Motor neuron (in vitro differentiated cells): ENCODE measurements at regions of chr22 and their contacts with region 1.

Region 1: GRCh38 chr22:30910358-30910757 is 58.2 kb downstream of the MORC2 start:
- ATAC-seq: no peak
- H3K4me3 ChIP-seq: no peak overlapping the region
- H3K27ac ChIP-seq: no peak overlapping the region
- H3K4me1 ChIP-seq: no peaks in the 10 kb centered on the region

Region 2: GRCh38 chr22:30763815-30764686 is 146.3 kb before region 1 on chr22:
- in situ Hi-C with region 1: loop called in 3 of 9 experiments (anchors 10 to 25 kb)
- ATAC-seq: peak; percentile 74 to 92 (median 86)
- H3K4me3 ChIP-seq: no peak overlapping the region
- H3K27ac ChIP-seq: no peak overlapping the region
- H3K4me1 ChIP-seq: peaks cover 7 to 13% of the 10 kb centered on the region in 2 donors

Region 3: DNA sequence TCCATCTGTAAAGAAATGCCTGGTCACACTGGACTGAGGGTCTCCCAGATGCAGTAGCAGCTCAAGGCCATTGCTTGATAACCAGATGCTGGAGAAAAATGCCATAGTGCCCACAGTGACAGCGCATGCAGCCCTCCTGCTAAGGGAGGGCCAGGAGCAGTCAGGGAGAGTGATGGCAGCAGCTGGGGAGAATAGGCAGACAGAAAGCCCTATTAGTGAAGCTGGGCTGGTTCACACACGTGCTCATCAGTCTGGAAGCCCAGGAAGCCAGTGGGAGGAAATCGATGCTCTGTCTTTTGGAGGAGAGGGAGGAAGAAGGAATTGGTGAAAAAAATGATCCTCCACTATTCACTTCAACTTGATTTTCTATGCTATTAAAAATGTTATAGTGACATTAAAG is 132.8 kb before region 1 on chr22:
- in situ Hi-C with region 1: loop called in 2 of 9 experiments (anchors 10 to 25 kb)
- ATAC-seq: peak in 5 of 8 experiments; percentile 51 to 82 (median 56)
- H3K4me3 ChIP-seq: no peak overlapping the region
- H3K27ac ChIP-seq: no peak overlapping the region
- H3K4me1 ChIP-seq: peaks cover 0 to 2% of the 10 kb centered on the region in 2 donors